B cell (primary cell): ENCODE measurements at regions of chr12 and their contacts with region 1.

Region 1: GRCh38 chr12:14272956-14273907 is 92.2 kb upstream of the ATF7IP start:
- DNase-seq: peak; percentile 50
- ATAC-seq: peak; percentile 60
- H3K4me3 ChIP-seq: peak overlapping the region in 1 of 5 experiments; percentile 0
- H3K4me3 Mint-ChIP-seq: peak overlapping the region; percentile 46
- H3K27ac ChIP-seq: peak overlapping the region; percentile 55 to 65
- H3K27ac Mint-ChIP-seq: peak overlapping the region; percentile 78
- H3K4me1 ChIP-seq: peaks cover 40 to 49% of the 10 kb centered on the region in 2 donors
- H3K4me1 Mint-ChIP-seq: peaks cover 45% of the 10 kb centered on the region
- H3K27me3 ChIP-seq: no peaks in the 10 kb centered on the region
- H3K27me3 Mint-ChIP-seq: no peaks in the 10 kb centered on the region
- CTCF ChIP-seq: no peak

Region 2: GRCh38 chr12:14185427-14186192 is 87.6 kb before region 1 on chr12:
- CTCF ChIA-PET with region 1: no interaction called
- POLR2A ChIA-PET with region 1: no interaction called
- intact Hi-C with region 1: no loop called
- DNase-seq: peak; percentile 69
- ATAC-seq: peak; percentile 76
- H3K4me3 ChIP-seq: peak overlapping the region in 3 of 5 experiments; percentile 30 to 52 (median 40)
- H3K4me3 Mint-ChIP-seq: peak overlapping the region; percentile 85
- H3K27ac ChIP-seq: no peak overlapping the region
- H3K27ac Mint-ChIP-seq: peak overlapping the region; percentile 88
- H3K4me1 ChIP-seq: peaks cover 13 to 21% of the 10 kb centered on the region in 2 donors
- H3K4me1 Mint-ChIP-seq: peaks cover 20% of the 10 kb centered on the region
- H3K27me3 ChIP-seq: no peaks in the 10 kb centered on the region
- H3K27me3 Mint-ChIP-seq: no peaks in the 10 kb centered on the region
- CTCF ChIP-seq: peak; percentile 81

Region 3: GRCh38 chr12:14314801-14315200 is 41.6 kb after region 1 on chr12:
- CTCF ChIA-PET with region 1: no interaction called
- POLR2A ChIA-PET with region 1: no interaction called
- intact Hi-C with region 1: loop called (anchors 5 kb)
- DNase-seq: peak; percentile 51
- ATAC-seq: peak; percentile 45
- H3K4me3 ChIP-seq: peak overlapping the region in 1 of 5 experiments; percentile 7
- H3K4me3 Mint-ChIP-seq: peak overlapping the region; percentile 24
- H3K27ac ChIP-seq: peak overlapping the region in 1 of 2 donors; percentile 58
- H3K27ac Mint-ChIP-seq: peak overlapping the region; percentile 78
- H3K4me1 ChIP-seq: peaks cover 25 to 27% of the 10 kb centered on the region in 2 donors
- H3K4me1 Mint-ChIP-seq: peaks cover 33% of the 10 kb centered on the region
- H3K27me3 ChIP-seq: no peaks in the 10 kb centered on the region
- H3K27me3 Mint-ChIP-seq: no peaks in the 10 kb centered on the region
- CTCF ChIP-seq: no peak

Region 4: GRCh38 chr12:14460212-14460841 is 187.1 kb after region 1 on chr12:
- CTCF ChIA-PET with region 1: no interaction called
- POLR2A ChIA-PET with region 1: no interaction called
- intact Hi-C with region 1: no loop called
- DNase-seq: peak; percentile 35
- ATAC-seq: peak; percentile 21
- H3K4me3 ChIP-seq: no peak overlapping the region
- H3K4me3 Mint-ChIP-seq: no peak overlapping the region
- H3K27ac ChIP-seq: peak overlapping the region in 1 of 2 donors; percentile 27
- H3K27ac Mint-ChIP-seq: peak overlapping the region; percentile 57
- H3K4me1 ChIP-seq: no peaks in the 10 kb centered on the region
- H3K4me1 Mint-ChIP-seq: peaks cover 10% of the 10 kb centered on the region
- H3K27me3 ChIP-seq: no peaks in the 10 kb centered on the region
- H3K27me3 Mint-ChIP-seq: no peaks in the 10 kb centered on the region
- CTCF ChIP-seq: no peak